ENCODE measurements at regions of chr1 and their contacts with region 1.

Region 1: DNA sequence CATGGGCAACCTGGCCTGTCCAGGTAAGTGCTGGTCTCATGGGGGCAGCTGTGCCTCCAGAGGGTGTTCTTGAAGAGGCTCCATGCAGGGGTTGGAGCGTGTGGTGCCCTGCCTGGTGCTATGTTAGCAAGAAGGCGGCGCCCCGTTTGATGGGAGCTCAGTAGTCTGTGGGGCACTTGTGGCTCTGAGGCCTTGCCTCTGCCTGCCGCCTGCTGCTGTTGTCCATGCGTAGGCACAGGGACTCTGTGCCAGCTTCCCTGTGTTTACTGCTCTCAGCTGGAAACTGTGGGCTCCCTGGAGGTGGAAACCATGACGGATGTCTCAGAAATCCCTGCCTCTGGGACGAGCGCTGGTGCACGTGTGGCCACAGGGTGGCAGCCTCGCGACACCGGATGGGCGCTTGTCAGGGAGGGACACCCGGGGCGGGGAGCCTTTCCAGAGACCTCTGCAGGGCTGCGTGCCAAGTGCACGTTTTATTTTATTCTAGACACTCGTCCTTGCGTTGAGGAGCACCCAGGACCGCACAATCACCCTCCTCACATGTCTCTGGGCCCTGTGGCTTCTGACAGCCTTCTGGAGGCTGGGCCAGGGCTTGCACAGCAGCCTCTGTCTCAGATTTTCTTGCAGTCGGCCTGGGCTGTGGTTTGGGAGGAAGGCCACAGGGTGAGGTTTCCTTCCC is 27.1 kb downstream of the SNAP47 start:
- DNase-seq: peak; percentile 70 to 94
- H3K4me3 ChIP-seq: no peak overlapping the region
- H3K27ac ChIP-seq: peak overlapping the region; percentile 87
- H3K4me1 ChIP-seq: peaks cover 57% of the 10 kb centered on the region
- H3K27me3 ChIP-seq: no peaks in the 10 kb centered on the region
- CTCF ChIP-seq: peak; percentile 87

Region 2: GRCh38 chr1:227482023-227482299 is 280.4 kb before region 1 on chr1:
- CTCF ChIA-PET with region 1: no interaction called
- POLR2A ChIA-PET with region 1: no interaction called
- intact Hi-C with region 1: loop called (anchors 5 kb)
- DNase-seq: no peak
- H3K4me3 ChIP-seq: no peak overlapping the region
- H3K27ac ChIP-seq: no peak overlapping the region
- H3K4me1 ChIP-seq: no peaks in the 10 kb centered on the region
- H3K27me3 ChIP-seq: peaks cover 5% of the 10 kb centered on the region; the same call in 1 of the 2 replicates
- CTCF ChIP-seq: no peak

Region 3: DNA sequence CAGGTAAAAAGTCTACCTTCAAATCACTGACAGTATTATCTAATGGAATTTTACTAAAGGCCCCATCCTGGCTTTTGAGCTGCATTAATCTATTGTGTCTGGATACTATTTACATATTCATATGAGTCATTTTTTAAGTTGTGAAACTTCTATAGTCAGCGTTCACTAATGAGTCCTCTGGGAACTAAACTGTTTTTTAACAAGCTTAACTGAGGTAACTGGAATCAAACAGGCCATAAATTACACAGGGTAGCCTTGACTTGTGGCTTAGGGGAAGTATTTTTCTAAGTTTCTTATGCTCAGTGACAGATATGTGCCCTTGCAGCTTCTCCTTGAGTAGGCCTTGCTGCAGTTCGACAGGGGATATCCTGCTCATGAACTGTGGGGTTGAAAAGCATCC is 96.1 kb before region 1 on chr1:
- CTCF ChIA-PET with region 1: no interaction called
- POLR2A ChIA-PET with region 1: no interaction called
- intact Hi-C with region 1: no loop called
- DNase-seq: no peak
- H3K4me3 ChIP-seq: no peak overlapping the region
- H3K27ac ChIP-seq: no peak overlapping the region
- H3K4me1 ChIP-seq: no peaks in the 10 kb centered on the region
- H3K27me3 ChIP-seq: no peaks in the 10 kb centered on the region
- CTCF ChIP-seq: no peak

Region 4: GRCh38 chr1:227787513-227788270 is 25.3 kb after region 1 on chr1:
- CTCF ChIA-PET with region 1: interaction called, 4 read pairs
- POLR2A ChIA-PET with region 1: interaction called, 6 read pairs
- intact Hi-C with region 1: loop called (anchors 1 kb)
- DNase-seq: peak; percentile 81 to 98
- H3K4me3 ChIP-seq: peak overlapping the region; percentile 57
- H3K27ac ChIP-seq: no peak overlapping the region
- H3K4me1 ChIP-seq: peaks cover 6% of the 10 kb centered on the region; the same call in 1 of the 2 replicates
- H3K27me3 ChIP-seq: no peaks in the 10 kb centered on the region
- CTCF ChIP-seq: no peak

Region 5: GRCh38 chr1:227946624-227947385 is 184.4 kb after region 1 on chr1:
- CTCF ChIA-PET with region 1: interaction called, 10 read pairs
- POLR2A ChIA-PET with region 1: interaction called, 5 read pairs
- intact Hi-C with region 1: loop called (anchors 1 kb)
- DNase-seq: peak; percentile 70 to 97
- H3K4me3 ChIP-seq: peak overlapping the region; percentile 64
- H3K27ac ChIP-seq: peak overlapping the region; percentile 62
- H3K4me1 ChIP-seq: peaks cover 23% of the 10 kb centered on the region
- H3K27me3 ChIP-seq: no peaks in the 10 kb centered on the region
- CTCF ChIP-seq: peak; percentile 81

Region 6: DNA sequence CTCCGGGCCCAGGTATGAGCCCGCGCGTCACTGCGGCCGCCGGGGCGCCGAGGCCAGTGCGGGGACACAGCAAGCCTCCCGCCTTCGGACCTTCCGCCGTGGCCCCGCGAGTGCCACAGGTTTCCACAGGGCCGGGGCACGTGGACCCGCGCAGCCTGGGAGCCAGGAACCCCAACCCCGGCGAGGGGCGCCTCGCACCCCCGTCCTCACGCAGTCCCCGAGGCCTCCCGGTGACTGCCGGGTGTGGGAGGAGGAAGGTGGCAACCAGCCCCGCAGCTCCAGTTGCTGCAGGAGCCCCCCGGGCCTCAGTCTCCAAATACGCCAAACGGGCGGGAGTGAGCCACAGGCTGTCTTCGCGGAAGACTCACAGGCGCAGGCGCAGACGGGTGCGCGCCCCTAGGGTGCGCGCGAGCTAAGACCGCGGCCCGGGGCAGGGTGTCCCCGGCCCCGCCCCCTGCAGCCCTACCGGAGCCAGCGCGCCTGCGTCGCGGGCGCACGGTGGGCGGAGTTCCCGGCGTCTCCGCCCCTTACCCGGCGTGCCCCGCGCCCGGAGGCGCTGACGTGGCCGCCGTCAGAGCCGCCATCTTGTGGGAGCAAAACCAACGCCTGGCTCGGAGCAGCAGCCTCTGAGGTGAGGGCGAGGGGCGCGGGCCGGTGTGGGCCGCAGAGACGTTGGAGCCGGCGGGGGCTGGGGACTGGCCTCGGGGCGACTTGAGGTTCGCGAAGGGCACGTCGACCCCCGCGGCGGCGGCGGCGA is 319.9 kb after region 1 on chr1 and contains the start of gene ARF1:
- CTCF ChIA-PET with region 1: no interaction called
- POLR2A ChIA-PET with region 1: interaction called, 3 read pairs
- intact Hi-C with region 1: loop called (anchors 5 kb)
- DNase-seq: peak; percentile 70 to 95
- H3K4me3 ChIP-seq: peak within 1 kb of the TSS; percentile 100
- H3K27ac ChIP-seq: peak within 1 kb of the TSS; percentile 78
- H3K4me1 ChIP-seq: peaks cover 38% of the 10 kb centered on the region
- H3K27me3 ChIP-seq: no peaks in the 10 kb centered on the region
- CTCF ChIP-seq: no peak
- total RNA-seq, gene ARF1: 431 and 595 TPM in 2 replicates

Region 7: DNA sequence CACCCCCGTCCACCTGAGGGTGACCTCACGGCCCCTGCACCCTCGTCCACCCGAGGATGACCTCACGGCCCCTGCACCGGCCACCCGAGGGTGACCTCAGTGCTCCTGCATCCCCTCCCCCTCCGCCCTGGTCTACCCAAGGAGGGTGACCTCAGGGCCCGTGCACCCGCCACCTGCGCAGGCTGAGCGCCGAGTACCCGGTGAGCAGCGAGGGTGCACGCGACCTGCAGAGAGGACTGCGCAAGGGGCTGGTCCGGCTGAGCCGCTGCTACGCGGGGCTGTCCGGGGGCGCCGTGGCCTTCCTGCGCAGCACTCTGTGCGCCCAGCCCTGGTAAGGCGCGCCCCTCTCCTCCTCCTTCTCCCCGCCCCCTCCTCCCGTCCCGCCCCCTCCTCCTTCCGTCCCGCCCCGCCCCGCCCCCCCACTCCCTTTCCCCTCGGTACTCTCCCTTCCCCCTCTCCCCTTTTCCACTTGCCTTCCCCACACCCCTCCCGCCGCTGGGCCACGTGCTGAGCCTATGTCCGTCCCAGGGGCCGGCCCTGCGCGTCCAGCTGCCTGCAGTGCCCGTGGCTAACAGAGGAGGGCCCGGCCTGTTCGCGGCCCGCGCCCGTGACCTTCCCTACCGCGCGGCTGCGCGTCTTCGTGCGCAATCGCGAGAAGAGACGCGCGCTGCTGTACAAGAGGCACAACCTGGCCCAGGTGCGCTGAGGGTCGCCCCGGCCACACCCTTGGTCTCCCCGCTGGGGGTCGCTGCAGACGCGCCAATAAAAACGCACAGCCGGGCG is 615.9 kb after region 1 on chr1:
- CTCF ChIA-PET with region 1: no interaction called
- POLR2A ChIA-PET with region 1: no interaction called
- intact Hi-C with region 1: loop called (anchors 10 kb)
- DNase-seq: peak; percentile 78 to 95
- H3K4me3 ChIP-seq: peak overlapping the region; percentile 67
- H3K27ac ChIP-seq: no peak overlapping the region
- H3K4me1 ChIP-seq: peaks cover 15% of the 10 kb centered on the region
- H3K27me3 ChIP-seq: no peaks in the 10 kb centered on the region
- CTCF ChIP-seq: peak; percentile 82